ENCODE measurements at regions of chr12 and their contacts with region 1.

Region 1: DNA sequence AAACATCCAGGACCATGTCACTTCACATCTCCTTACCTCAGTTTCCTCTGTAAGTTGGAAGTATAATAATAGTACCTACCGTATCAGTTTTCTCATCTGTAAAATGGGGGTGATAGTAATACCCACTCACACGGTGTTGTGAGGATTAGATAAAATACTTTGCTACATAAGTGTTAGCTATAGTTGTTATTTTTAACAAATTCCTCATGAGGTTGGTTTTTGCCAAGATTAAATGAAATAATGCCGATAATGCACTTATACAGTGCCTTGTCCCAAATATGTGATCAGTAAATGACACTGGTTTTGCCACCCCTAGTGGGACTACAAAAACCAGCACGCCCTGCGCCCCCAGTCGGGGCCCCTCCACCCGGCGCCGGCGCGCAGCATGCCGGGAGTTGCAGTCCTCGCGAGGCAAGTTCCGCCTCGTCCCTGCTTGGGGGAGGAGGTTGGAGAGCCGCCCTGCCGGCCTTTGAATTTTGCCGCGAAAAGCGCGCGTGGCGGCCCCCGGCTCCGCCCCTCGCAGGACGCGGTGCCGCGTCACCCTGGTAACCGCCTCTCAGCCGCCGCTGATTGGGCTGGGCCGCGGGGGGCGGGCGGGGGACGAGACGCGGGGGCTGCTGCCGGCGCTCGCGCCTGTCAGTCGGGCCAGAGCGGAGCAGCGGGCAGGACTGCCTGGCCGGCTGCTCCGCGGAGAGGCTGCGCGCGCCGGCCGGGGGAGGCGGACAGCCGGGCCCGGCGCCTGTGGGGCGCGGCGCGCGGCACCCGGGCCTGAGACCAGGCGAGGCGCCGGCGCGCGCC is at the start of gene FAM222A:
- DNase-seq: peak; percentile 90 to 96 (median 95)
- H3K4me3 ChIP-seq: peak within 1 kb of the TSS; percentile 42 to 80 (median 57)
- H3K4me3 Mint-ChIP-seq: peak within 1 kb of the TSS; percentile 73 to 85
- H3K27ac ChIP-seq: no peak within 1 kb of the TSS
- H3K27ac Mint-ChIP-seq: peak within 1 kb of the TSS in 1 of 7 donors; percentile 6
- H3K4me1 ChIP-seq: peaks cover 8 to 13% of the 10 kb centered on the region in 2 donors
- H3K4me1 Mint-ChIP-seq: peaks cover 5% of the 10 kb centered on the region
- H3K27me3 ChIP-seq: peaks cover 14 to 64% of the 10 kb centered on the region in 2 donors
- H3K27me3 Mint-ChIP-seq: peaks cover 54 to 75% (median 71%) of the 10 kb centered on the region in 3 donors
- CTCF ChIP-seq: no peak
- polyA plus RNA-seq, gene FAM222A: 0.09 TPM in 1 of 3 donors, not detected in the others

Region 2: DNA sequence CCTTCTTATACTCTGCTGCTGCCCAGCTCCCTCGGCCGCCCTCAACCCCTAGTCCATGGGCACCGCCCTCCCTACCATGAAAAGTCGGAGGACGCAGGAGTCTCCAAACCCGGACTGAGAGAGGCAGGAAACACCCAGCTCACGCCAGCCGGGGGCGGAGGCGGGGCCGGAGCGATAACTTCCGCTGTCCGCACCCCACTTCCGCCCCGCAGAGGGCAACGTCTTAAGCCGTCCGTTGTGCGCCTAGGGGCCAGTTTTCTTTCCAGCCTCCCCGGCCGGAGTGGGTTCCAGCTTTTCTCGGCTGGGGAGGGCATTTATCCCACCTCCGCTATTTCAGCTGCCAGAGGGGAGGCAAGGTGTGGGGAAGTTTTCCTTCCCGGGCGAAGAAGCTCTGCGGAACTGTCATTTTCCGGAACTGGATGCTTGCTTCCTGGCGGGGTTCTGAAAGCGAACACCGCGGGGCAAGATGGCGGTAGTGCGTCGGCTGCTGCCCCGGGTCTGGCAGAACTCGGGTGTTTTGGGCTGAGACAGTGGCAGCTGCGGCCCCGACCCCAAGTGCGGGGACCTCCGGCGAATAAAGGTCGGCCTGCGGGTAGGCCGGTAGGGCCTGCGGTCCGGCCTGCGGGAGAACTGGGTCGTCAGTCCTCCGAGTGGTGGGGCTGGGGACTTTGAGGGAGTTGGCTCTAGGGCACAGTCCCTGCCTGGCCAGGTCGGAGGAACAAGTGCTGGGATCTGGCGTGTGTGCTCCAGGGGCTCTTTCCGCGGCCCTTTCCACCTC is 236.0 kb before region 1 on chr12 and contains the starts of genes KCTD10 and UBE3B:
- intact Hi-C with region 1: loop called (anchors 5 kb)
- DNase-seq: peak; percentile 88 to 90 (median 88)
- H3K4me3 ChIP-seq: peak within 1 kb of the TSS; percentile 74 to 95 (median 81)
- H3K4me3 Mint-ChIP-seq: peak within 1 kb of the TSS; percentile 93 to 96
- H3K27ac ChIP-seq: peak within 1 kb of the TSS; percentile 85 to 93
- H3K27ac Mint-ChIP-seq: peak within 1 kb of the TSS; percentile 92 to 100 (median 100)
- H3K4me1 ChIP-seq: peaks cover 20 to 28% of the 10 kb centered on the region in 2 donors
- H3K4me1 Mint-ChIP-seq: peaks cover 24% of the 10 kb centered on the region
- H3K27me3 ChIP-seq: no peaks in the 10 kb centered on the region
- H3K27me3 Mint-ChIP-seq: no peaks in the 10 kb centered on the region
- CTCF ChIP-seq: no peak
- polyA plus RNA-seq, gene KCTD10: 18.1 to 21.0 (median 20.0) TPM
- polyA plus RNA-seq, gene UBE3B: 14.4 to 25.9 (median 18.2) TPM

Region 3: DNA sequence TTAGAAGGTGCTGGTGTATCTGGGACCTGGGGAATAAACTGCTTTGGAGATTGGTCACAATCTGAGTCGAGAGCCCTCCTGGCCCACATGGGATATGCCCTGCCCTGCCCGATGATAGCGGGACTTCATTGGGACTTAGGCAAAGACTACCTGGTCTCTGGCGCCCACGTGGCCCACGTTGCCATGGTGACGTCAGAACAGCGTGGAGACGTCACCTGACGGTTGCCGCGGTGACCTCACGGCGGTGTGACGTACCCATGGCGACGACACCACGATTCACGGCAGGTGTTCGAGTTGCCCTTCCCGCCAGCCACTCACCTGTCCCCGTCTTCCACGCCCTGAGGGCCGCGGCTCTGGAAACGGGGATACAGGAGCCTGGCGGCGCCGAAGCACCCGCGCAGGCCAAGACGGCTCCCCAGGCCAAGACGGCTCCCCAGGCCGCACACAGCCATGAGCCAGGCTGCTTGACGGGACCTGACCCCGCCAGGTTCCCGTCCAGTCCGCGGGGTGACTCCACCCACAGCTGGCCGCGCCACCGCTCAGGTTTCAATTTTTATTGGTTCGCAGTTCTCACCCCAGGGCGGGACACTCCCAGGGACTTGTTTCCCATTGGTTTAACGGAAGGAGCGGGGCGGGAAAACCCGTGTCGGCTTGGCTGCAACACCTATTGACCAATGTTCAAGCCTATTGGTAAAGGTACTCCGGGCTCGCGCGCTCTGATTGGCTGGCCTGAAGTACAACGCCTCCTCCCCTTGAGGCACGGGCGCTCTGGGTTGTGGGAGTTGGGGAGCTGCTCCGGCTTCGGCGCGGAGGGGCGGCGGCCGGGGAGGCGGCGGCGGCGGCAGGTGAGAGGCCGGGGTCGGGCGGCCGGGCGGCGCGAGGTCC is 140.1 kb before region 1 on chr12 and contains the starts of genes MMAB and MVK:
- intact Hi-C with region 1: loop called in 1 of 2 experiments (anchors 5 kb)
- DNase-seq: peak; percentile 99 to 100 (median 99)
- H3K4me3 ChIP-seq: peak within 1 kb of the TSS; percentile 61 to 85 (median 83)
- H3K4me3 Mint-ChIP-seq: peak within 1 kb of the TSS; percentile 84 to 92
- H3K27ac ChIP-seq: peak within 1 kb of the TSS; percentile 74 to 87
- H3K27ac Mint-ChIP-seq: peak within 1 kb of the TSS; percentile 89 to 98 (median 97)
- H3K4me1 ChIP-seq: peaks cover 14 to 20% of the 10 kb centered on the region in 2 donors
- H3K4me1 Mint-ChIP-seq: peaks cover 16% of the 10 kb centered on the region
- H3K27me3 ChIP-seq: no peaks in the 10 kb centered on the region
- H3K27me3 Mint-ChIP-seq: no peaks in the 10 kb centered on the region
- CTCF ChIP-seq: no peak
- polyA plus RNA-seq, gene MMAB: 5.0 to 15.6 (median 12.4) TPM
- polyA plus RNA-seq, gene MVK: 1.1 to 3.8 (median 1.6) TPM

Region 4: DNA sequence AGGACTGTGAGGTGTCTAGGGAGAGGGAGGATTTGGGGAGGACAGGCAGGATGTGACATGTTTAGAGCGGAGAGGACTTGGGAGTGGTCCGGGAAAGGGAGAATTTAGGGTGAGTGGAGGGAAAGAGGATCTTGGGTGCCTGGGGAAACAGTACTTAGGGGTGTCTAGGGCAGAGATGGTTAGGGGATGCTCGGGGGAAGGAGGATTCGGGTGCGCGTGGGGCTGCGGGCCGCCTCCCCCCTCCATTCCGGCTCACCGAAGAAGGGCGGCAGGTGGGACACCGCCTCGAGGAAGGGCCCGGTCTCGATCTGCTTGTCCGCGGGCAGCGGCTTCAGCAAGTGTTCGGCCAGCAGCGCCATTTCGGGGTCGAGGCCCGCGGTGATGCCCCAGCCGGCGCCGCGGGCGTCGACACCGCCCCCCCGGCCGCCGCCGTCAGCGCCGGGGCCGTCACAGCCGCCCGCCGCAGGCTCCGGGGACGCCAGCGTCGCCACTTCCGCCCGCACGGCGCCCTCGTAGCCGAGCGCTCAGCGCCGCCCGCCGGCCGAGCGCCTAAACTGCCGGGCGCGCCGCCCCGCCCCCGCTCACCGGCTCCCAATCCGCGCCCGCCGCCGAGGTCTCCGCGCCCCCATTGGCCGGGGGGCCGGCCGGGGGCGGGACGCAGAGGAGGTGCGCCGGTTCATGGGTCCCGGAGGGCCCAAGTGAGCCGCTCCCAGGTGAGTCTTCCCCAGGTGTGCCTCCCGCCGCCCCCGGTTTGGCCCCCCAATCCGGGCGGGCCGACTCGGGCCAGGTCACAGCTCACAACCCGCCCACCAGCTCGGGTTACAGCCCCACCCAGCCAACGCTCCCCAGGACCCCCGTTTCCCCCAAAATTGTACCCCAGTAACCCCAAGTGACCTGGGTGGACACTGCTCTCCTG is 166.9 kb after region 1 on chr12 and contains the start of gene GLTP:
- intact Hi-C with region 1: loop called in 1 of 2 experiments (anchors 10 kb)
- DNase-seq: peak; percentile 78 to 90 (median 85)
- H3K4me3 ChIP-seq: peak within 1 kb of the TSS; percentile 96 to 98 (median 97)
- H3K4me3 Mint-ChIP-seq: peak within 1 kb of the TSS; percentile 94 to 97
- H3K27ac ChIP-seq: peak within 1 kb of the TSS; percentile 72 to 92
- H3K27ac Mint-ChIP-seq: peak within 1 kb of the TSS; percentile 87 to 98 (median 93)
- H3K4me1 ChIP-seq: peaks cover 48 to 64% of the 10 kb centered on the region in 2 donors
- H3K4me1 Mint-ChIP-seq: peaks cover 73% of the 10 kb centered on the region
- H3K27me3 ChIP-seq: no peaks in the 10 kb centered on the region
- H3K27me3 Mint-ChIP-seq: peaks cover 0 to 4% (median 2%) of the 10 kb centered on the region in 3 donors
- CTCF ChIP-seq: peak; percentile 68
- polyA plus RNA-seq, gene GLTP: 46.2 to 65.9 (median 51.7) TPM